OCI-LY7 (cell line): ENCODE measurements at regions of chr19 and their contacts with region 1.

Region 1: DNA sequence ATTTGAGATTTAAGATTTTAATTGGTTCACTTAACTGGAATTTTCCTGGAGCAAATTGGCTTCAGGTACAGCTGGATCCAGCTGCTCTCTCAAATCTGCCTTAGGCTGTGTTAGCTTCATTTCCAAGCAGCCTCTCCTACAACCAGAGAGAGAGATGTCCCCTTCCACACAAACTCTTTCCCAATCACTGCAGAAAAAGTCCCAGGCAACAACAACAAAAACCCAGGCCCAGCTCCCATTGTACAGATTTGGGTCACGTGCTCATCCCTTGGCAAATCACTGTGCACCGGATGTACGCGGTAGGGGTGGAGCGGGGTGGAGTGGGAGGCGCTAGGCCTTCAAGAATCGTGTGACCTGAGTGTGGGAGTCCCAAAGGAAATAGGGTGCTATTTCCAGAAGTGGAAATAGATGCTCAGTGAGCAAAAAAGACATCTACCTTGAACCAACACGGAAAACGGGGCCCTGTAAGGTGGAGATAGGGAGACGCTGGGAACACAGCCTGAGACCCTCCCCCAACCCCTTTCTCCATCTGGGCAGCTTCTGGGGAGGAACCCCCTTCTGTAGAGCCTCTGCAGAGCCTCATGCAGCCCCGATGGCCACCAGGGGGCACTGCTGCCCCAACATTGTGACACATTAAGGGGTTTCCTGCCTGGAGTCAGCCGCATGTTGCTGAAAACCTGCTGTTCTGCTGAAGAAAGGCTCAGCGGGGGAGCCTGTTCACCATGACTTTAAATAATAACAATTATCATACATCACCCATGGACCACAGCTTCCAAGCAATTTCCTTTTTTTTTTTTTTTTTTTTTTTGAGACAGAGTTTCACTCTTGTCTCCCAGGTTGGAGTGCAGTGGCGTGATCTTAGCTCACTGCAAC is 25.4 kb downstream of the HPN start:
- DNase-seq: peak; percentile 97
- H3K4me3 ChIP-seq: peak overlapping the region; percentile 58
- H3K27ac ChIP-seq: peak overlapping the region; percentile 69
- H3K4me1 ChIP-seq: peaks cover 40% of the 10 kb centered on the region
- CTCF ChIP-seq: peak; percentile 99

Region 2: DNA sequence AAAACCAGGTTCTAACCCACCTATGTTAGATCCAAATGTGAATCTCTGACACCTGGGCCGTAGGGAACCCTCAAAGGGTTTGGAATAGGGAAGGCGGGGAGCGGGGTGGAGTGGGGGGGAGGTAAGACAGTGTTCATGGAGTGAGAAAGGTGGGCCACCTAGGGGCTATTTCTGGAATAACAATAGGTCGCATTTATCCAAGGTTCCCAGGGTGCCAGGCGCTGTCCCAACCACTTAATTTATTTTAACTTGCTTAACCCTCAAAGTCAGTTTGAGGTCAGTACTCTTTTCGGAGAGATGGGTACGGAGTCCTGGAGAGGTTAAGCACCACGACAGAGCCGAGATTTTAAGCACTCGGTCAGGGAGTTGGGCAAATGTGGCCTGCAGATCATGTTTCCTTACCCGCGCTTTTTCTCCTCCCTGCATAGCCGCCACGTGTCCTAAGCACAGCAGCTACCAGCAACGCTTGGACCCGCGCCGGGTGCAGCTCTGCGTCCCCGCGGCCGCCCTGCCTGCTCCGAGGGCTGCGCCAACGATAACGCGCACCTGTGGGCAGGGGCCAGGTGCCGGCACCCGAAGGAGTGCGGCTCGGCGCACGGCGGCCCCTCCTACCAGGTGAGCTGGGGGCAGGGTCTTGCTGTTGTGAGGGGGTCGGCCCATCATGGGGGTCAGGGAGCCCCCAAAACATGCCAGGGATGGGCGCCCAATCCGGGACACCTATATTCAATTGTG is 23.7 kb after region 1 on chr19:
- CTCF ChIA-PET with region 1: interaction called, 20 read pairs
- POLR2A ChIA-PET with region 1: interaction called, 49 read pairs
- intact Hi-C with region 1: loop called (anchors 1 kb)
- DNase-seq: peak; percentile 84
- H3K4me3 ChIP-seq: peak overlapping the region; percentile 42
- H3K27ac ChIP-seq: peak overlapping the region; percentile 99
- H3K4me1 ChIP-seq: peaks cover 56% of the 10 kb centered on the region
- CTCF ChIP-seq: peak; percentile 85

Region 3: GRCh38 chr19:35114353-35115176 is 47.6 kb after region 1 on chr19:
- CTCF ChIA-PET with region 1: no interaction called
- POLR2A ChIA-PET with region 1: no interaction called
- intact Hi-C with region 1: loop called (anchors 1 kb)
- DNase-seq: peak; percentile 79
- H3K4me3 ChIP-seq: peak overlapping the region; percentile 43
- H3K27ac ChIP-seq: no peak overlapping the region
- H3K4me1 ChIP-seq: no peaks in the 10 kb centered on the region
- CTCF ChIP-seq: peak; percentile 97

Region 4: GRCh38 chr19:35135389-35135909 is 68.5 kb after region 1 on chr19:
- CTCF ChIA-PET with region 1: interaction called, 16 read pairs
- POLR2A ChIA-PET with region 1: interaction called, 17 read pairs
- intact Hi-C with region 1: loop called (anchors 1 kb)
- DNase-seq: peak; percentile 79
- H3K4me3 ChIP-seq: no peak overlapping the region
- H3K27ac ChIP-seq: no peak overlapping the region
- H3K4me1 ChIP-seq: peaks cover 9% of the 10 kb centered on the region
- CTCF ChIP-seq: peak; percentile 91

Region 5: GRCh38 chr19:35213663-35214632 is 147.0 kb after region 1 on chr19:
- CTCF ChIA-PET with region 1: interaction called, 3 read pairs
- POLR2A ChIA-PET with region 1: no interaction called
- intact Hi-C with region 1: loop called (anchors 2 kb)
- DNase-seq: peak; percentile 93
- H3K4me3 ChIP-seq: peak overlapping the region; percentile 38
- H3K27ac ChIP-seq: peak overlapping the region; percentile 83
- H3K4me1 ChIP-seq: peaks cover 77% of the 10 kb centered on the region
- CTCF ChIP-seq: no peak